Right ventricle myocardium inferior (tissue), 1 donor: ENCODE measurements at regions of chrX and their contacts with region 1.

Region 1: DNA sequence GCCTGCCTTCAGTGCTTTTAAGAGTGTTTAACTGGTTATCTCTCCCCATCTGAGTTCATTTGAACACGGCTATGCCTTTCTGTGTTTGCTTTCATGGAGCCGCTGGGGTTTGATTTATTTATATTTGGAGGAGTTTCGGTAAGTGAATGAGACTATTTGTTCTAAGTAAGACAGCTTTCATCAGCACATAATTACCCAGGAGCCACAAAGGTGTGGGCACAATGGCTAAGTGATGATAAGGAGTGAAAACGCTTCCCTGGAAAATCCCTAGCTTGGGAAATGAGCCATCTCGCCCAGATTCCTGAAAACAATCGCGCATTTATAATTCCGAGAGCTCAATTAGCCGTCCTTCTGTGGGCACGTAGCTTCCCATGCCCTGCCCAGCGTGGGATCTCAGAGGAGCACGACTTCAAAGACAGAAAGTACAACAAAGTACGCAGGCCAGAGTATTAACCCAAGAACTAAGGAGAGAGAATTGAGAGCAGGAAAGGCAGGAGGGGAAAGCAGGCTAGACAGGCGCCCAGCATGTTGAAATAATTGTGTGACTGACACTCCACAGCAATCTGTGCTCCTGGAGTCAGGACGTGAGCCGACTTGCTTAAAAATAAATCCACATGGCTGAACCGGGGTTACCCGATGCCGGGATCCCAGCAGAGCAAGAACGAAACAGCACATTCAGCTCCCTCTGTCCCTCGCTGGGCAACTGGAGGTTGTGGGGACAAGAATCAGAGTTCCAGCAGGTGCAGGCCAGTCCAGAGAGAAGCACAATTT is 99.0 kb downstream of the DHRSX start:
- DNase-seq: no peak
- ATAC-seq: peak; percentile 90

Region 2: DNA sequence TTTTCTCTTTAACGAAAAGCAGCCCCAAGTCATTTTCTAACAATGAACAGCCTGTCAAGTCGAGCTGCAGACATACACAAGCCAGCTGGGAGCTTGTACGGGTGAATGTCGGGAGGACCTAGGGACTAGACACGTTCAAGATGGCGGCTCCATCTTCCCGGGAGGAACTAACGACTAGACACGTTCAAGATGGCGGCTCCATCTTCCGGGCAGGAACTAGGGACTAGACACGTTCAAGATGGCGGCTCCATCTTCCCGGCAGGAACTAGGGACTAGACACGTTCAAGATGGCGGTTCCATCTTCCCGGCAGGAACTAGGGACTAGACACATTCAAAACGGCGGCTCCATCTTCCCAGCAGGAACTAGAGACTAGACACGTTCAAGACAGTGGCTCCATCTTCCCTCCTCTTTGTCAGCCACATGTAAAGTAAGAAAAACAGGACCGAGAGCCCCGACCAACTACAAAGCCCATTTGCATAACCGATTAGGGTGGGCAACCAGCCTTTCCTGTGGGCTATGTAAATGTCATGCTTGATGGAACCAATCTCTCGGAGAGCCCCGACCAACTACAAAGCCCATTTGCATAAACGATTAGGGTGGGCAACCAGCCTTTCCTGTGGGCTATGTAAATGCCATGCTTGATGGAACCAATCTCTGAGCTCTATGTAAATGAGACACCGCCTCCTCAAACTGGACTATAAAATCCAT is 76.5 kb before region 1 on chrX:
- intact Hi-C with region 1: loop called (anchors 5 kb)
- DNase-seq: peak; percentile 65
- ATAC-seq: no peak

Region 3: DNA sequence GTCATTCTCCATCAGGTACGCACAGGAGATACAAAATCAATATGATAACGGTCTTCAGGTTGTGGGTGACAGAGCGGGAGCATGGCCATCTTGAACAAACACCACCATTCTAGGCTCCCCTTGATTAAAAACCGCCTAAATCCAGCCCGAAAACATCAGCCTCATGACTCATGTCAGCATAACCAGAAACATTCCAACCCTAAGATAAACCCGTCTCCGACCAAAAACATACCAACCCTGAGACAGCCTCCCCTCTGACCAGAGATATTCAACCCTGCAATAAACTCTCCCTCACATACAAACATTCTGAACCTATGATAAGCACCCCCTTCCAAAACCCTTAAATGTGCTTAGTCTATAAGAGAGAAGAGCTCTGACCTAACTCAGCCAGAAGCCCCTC is 58.9 kb before region 1 on chrX:
- intact Hi-C with region 1: loop called (anchors 5 kb)
- DNase-seq: no peak
- ATAC-seq: no peak

Region 4: GRCh38 chrX:2498781-2499302 is 97.1 kb after region 1 on chrX:
- intact Hi-C with region 1: loop called (anchors 5 kb)
- DNase-seq: no peak
- ATAC-seq: peak; percentile 66